Heart right ventricle (tissue), 16 donors: ENCODE measurements at regions of chr3 and their contacts with region 1.

Region 1: DNA sequence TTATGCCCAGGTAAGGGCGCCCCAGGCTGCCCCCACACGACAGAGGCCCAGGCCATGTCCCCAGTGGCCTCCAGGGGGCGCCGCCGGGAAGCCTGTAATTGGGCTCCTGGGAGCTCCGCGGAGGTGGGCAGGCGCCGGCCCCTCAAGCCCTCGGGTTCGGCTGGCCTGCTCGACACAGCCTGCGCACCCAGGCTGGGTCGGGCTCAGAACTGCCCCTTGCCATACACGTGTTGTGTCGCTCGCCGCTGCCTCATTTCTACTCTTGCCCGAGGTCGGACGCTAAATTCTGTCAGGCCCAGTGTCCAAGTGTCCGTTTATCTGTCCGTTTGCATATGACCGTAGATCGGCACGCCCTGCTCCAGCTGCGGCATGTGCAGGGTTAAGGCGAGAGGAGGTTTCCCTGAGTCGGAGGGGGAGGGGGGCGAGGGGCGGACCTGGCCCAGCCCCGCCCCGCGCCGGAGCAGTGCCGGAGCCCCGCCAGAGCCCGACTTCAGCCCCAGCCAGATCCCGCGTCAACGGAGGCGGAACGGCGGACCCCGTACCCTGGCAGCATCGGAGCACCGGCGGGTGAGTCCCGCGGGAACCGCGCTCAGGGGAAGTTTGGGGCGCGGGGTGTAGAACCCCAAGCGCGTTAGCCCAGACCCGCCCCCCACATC is at the start of gene KLHDC8B:
- DNase-seq: peak; percentile 91
- ATAC-seq: peak; percentile 86 to 93 (median 91)
- H3K4me3 ChIP-seq: peak within 1 kb of the TSS; percentile 42 to 100 (median 84)
- H3K27ac ChIP-seq: peak within 1 kb of the TSS; percentile 81 to 100 (median 94)
- H3K4me1 ChIP-seq: peaks cover 22 to 63% (median 55%) of the 10 kb centered on the region in 9 donors
- H3K27me3 ChIP-seq: no peaks in the 10 kb centered on the region
- CTCF ChIP-seq: peak; percentile 90 to 98 (median 97)
- total RNA-seq, gene KLHDC8B: 87.9 to 190 (median 118) TPM

Region 2: DNA sequence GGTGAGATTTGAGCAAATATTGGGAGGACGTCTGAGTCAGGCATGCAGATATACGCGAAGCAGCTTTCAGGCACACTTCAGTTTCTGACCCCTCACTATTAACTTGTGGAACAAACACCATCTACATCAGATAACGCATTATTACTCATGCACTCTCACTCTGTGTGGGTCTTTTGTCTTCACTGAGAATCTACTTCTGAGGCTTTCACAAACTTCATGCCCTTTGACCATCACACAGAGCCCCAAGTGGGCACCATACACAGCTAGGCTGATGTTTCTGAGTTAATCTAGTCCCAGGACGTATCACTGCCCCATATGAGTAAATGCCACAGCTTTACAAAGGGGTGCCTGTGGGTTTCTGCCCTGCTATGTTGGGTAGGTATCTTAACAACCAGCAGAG is 414.6 kb before region 1 on chr3:
- intact Hi-C with region 1: no loop called
- DNase-seq: no peak
- ATAC-seq: no peak
- H3K4me3 ChIP-seq: no peak overlapping the region
- H3K27ac ChIP-seq: no peak overlapping the region
- H3K4me1 ChIP-seq: no peaks in the 10 kb centered on the region
- H3K27me3 ChIP-seq: no peaks in the 10 kb centered on the region
- CTCF ChIP-seq: no peak

Region 3: DNA sequence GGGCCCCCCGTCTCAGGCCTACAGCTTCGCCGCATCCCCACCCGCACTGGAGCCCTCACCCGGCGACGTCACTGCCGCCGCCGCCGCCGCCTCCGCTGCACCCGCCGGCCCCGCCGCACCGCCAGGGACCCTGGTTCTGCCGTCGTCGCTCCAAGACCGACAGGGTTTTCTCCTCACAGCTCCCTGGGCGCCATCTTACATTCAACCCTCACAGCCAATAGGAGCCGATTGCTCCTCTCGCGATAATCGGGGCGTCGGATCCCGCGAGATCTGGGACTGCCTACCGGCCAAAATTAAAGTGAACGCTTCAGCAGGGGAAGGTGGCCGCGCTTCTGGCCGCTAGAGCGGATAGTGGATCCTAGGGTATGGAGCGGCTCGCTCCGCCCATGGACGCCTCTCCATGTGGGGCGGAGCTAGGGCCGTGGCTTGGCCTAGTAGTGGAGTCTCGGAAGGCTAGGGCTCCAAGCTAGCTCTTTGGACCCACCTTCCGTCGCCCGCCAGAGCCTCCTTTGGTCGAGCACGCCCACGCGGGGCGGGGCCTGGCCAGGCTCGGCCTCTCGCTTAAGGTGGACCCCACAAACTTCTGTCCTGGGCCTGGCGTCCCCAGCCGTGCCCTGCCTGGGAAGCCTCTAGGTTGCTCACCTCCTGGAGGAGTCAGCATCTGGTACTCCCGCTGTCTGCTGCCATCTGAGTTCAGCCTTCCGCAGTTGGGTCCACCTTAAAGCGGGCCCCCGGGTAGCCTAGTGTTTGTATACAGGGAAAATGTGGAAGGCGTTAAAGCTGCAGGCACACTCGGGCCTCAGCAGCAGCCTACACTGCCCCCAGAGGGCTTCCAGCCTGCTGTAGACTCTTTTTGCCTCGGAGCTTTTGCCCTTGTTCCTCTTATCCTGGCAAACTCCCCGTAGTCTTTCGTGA is 77.1 kb before region 1 on chr3 and contains the start of gene QRICH1:
- intact Hi-C with region 1: loop called in 2 of 10 experiments (anchors 1 to 2 kb)
- DNase-seq: peak; percentile 96 to 98
- ATAC-seq: peak; percentile 90 to 96 (median 94)
- H3K4me3 ChIP-seq: peak within 1 kb of the TSS; percentile 71 to 99 (median 90)
- H3K27ac ChIP-seq: peak within 1 kb of the TSS; percentile 84 to 98 (median 94)
- H3K4me1 ChIP-seq: peaks cover 17 to 64% (median 48%) of the 10 kb centered on the region in 9 donors
- H3K27me3 ChIP-seq: no peaks in the 10 kb centered on the region
- CTCF ChIP-seq: peak; percentile 28 to 72 (median 54)
- total RNA-seq, gene QRICH1: 54.5 to 72.5 (median 58.7) TPM

Region 4: DNA sequence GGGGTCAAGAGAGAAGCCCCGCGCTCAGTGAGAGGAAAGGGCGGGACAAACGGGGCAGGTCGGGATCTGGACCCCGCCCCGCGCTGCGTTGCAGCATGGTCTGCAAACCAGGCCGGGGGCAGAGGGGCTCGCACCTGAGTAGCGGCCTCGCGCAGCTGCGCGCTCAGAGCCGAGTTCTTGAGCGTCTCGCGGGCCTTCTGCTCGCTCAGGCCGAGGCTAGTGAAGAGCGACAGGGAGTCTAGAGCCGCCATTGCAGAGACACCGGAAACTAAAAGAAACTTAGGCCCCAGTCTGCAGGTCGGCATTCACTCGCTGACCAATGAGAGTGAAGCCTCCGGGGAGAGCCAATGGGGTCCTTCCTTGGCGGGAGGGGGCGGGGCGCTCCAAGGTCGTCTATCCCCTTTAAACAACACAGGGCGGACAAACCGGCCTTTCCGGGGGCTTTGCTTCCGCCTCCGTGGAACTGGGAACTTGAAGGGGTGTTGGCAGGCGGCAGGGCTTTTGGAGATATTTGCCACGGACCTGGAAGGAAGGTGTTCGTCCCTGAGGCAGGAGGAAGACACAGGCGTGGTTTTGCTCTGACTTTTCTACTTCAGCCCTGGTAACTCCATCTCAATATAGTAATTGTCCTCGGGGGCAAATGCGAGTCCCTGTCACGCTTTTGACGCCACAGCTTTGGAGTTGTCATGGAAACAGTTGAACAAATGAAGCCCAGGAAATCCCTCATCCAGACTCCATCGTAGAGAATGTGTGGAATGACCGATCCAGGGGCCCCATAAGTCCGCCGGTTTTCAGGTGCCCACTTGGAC is 66.6 kb before region 1 on chr3 and contains the start of gene QARS1:
- intact Hi-C with region 1: no loop called
- DNase-seq: peak; percentile 94 to 97
- ATAC-seq: peak; percentile 95 to 99 (median 98)
- H3K4me3 ChIP-seq: peak within 1 kb of the TSS; percentile 63 to 100 (median 86)
- H3K27ac ChIP-seq: peak within 1 kb of the TSS; percentile 84 to 94 (median 91)
- H3K4me1 ChIP-seq: peaks cover 12 to 27% (median 23%) of the 10 kb centered on the region in 9 donors
- H3K27me3 ChIP-seq: no peaks in the 10 kb centered on the region
- CTCF ChIP-seq: no peak
- total RNA-seq, gene QARS1: 173 to 265 (median 206) TPM

Region 5: GRCh38 chr3:49217688-49218470 is 46.6 kb after region 1 on chr3:
- intact Hi-C with region 1: loop called in 1 of 10 experiments (anchors 5 kb)
- DNase-seq: peak; percentile 14 to 33
- ATAC-seq: peak; percentile 67 to 91 (median 80)
- H3K4me3 ChIP-seq: no peak overlapping the region
- H3K27ac ChIP-seq: peak overlapping the region; percentile 56 to 89 (median 83)
- H3K4me1 ChIP-seq: peaks cover 6 to 24% (median 18%) of the 10 kb centered on the region in 9 donors
- H3K27me3 ChIP-seq: no peaks in the 10 kb centered on the region
- CTCF ChIP-seq: no peak

Region 6: GRCh38 chr3:49283997-49284396 is 112.8 kb after region 1 on chr3:
- intact Hi-C with region 1: loop called in 7 of 10 experiments (anchors 5 to 10 kb)
- DNase-seq: no peak
- ATAC-seq: no peak
- H3K4me3 ChIP-seq: no peak overlapping the region
- H3K27ac ChIP-seq: no peak overlapping the region
- H3K4me1 ChIP-seq: peaks cover 0 to 12% (median 10%) of the 10 kb centered on the region in 9 donors
- H3K27me3 ChIP-seq: no peaks in the 10 kb centered on the region
- CTCF ChIP-seq: no peak

Region 7: DNA sequence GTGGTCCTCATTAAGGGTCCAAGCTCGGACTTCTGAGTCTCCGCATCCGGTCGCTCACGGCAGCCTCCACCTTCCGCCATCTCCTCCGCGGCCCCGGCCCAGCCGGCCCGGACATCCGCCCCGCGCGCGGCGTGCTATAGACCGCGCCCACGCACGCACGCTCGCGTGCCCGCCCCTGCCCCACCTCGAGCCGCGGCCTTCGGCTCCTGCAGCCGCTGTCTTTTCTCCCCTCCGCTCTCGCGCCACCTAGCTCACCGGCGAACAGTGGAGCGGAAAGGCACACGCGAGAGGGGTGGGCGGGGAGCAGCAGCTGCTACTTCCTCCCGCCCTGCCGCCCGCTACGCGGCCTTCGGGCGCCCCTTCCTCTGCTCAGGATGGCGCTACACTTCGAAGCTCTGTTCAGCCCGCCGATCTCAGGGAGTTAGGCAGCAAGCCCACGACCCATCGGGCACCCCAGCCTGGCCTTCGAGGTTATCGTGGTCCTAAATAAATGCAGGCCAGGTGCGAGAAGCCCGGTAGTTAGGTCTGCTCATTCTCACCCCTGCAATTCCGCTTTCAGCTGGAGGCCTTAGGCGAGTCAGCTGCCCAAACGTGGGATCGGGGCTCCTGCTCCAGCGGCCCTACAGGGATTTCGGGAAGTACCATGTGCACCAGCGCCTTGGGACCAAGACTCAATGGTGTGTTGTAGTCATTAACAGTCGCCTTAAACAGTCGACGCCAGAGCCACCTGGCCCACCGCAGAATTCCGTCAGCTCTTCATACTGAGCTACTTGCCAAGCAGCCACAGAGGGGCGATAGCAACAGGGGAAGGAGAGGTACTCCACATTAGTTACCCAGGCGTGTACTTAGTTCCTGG is 168.9 kb after region 1 on chr3 and contains the start of gene USP4:
- intact Hi-C with region 1: loop called in 4 of 10 experiments (anchors 1 to 5 kb)
- DNase-seq: peak; percentile 91
- ATAC-seq: peak; percentile 95 to 99 (median 96)
- H3K4me3 ChIP-seq: peak within 1 kb of the TSS; percentile 60 to 96 (median 78)
- H3K27ac ChIP-seq: peak within 1 kb of the TSS; percentile 94 to 99 (median 96)
- H3K4me1 ChIP-seq: peaks cover 8 to 77% (median 34%) of the 10 kb centered on the region in 9 donors
- H3K27me3 ChIP-seq: no peaks in the 10 kb centered on the region
- CTCF ChIP-seq: peak in 6 of 9 donors; percentile 20 to 72 (median 52)
- total RNA-seq, gene USP4: 35.4 to 48.3 (median 43.5) TPM

Region 8: GRCh38 chr3:49454458-49454857 is 283.2 kb after region 1 on chr3:
- intact Hi-C with region 1: loop called in 7 of 10 experiments (anchors 1 to 10 kb)
- DNase-seq: no peak
- ATAC-seq: peak in 6 of 8 donors; percentile 34 to 75 (median 65)
- H3K4me3 ChIP-seq: no peak overlapping the region
- H3K27ac ChIP-seq: peak overlapping the region in 8 of 10 donors; percentile 7 to 76 (median 54)
- H3K4me1 ChIP-seq: peaks cover 9 to 38% (median 19%) of the 10 kb centered on the region in 9 donors
- H3K27me3 ChIP-seq: no peaks in the 10 kb centered on the region
- CTCF ChIP-seq: peak in 8 of 9 donors; percentile 19 to 57 (median 38)